GM12878 (cell line): ENCODE measurements at regions of chr2 and their contacts with region 1.

Region 1: DNA sequence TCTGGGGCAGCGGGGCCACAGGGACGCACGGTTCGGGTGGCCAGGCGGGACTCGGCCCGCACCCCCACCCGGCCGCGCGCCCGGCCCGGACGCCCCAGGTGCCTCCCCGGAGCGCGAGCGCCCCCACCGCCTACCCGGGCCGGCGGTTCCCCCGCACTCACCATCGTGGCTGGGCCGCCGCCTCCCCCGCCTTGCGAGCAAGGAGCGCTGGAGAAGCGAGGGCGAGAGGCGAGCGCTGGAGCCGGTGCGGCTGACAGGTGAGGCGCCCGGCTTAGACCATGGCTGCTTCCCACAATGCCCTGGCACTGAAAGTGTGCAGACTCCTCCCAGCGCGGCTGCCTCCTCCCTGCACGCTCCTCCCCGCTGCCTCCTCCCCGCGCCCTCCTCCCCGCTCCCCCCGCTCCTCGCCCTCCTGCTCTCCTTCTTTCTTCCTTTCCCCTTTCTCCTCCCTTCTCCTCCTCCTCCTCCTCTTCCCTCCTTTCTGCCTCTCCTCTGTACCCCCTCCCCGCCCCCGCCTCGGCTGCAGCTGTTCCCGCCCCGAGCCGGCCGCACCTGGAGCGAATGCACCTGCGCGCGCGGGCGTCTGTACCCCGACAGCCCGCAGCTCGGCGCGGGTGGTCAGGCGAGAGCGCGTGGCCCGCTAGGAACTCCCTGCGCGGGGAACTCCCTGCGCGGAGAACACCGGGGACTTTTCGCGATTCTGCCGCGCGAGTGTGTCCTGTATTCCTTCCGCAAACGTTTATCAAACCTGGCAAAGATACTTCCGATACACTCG is at the start of gene AP1S3:
- DNase-seq: no peak
- ATAC-seq: peak; percentile 84
- H3K4me3 ChIP-seq: peak within 1 kb of the TSS; percentile 82
- H3K27ac ChIP-seq: peak within 1 kb of the TSS; percentile 58
- H3K4me1 ChIP-seq: peaks cover 8% of the 10 kb centered on the region; the same call in 1 of the 2 replicates
- H3K27me3 ChIP-seq: no peaks in the 10 kb centered on the region
- CTCF ChIP-seq: peak in 2 of 3 experiments; percentile 11 to 24; a peak in 2 of 6 replicates
- EP300 ChIP-seq: 0 out of 4 replicates have a peak, but pooled peaks of 1 of the 2 experiments have one; percentile 3
- POLR2A ChIP-seq: peak; percentile 82
- RAD21 ChIP-seq: no peak
- polyA plus RNA-seq, gene AP1S3: 2.6 to 3.3 TPM

Region 2: DNA sequence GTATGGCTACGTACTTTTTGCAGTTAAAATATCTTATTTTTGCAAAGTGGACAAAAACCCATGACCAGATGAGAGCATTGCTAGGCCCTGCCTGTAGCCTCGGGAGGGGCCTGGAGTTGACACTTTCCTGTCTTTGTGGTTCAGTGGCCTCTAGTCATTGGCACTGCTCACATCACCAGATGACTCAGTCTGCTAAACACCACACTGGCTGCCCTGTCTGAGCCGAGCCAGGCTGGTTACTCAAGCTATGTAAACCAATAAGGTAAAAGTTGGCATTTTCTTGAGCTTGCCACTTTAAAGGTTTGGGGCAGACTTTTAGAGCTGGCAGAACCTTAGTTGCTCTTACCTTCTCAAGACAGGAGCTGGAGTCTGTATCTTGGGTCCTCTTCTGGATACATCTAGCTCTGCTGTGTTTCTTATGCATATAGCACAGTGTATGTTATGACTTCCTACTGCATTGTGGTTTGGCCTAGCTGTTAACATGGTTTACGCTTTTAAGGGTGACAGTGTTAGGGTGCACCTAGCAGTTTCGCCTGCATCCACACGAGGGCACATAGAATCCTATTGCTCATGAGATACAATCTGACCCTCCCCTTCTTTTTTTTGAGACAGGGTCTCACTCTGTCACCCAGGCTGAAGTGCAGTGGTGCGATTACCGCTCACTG is 76.5 kb before region 1 on chr2:
- CTCF ChIA-PET with region 1: interaction called, 3 read pairs
- POLR2A ChIA-PET with region 1: no interaction called
- RAD21 ChIA-PET with region 1: interaction called, 3 read pairs
- SMC1A ChIA-PET with region 1: interaction called, 3 read pairs
- in situ Hi-C with region 1: no loop called
- intact Hi-C with region 1: loop called (anchors 1 kb)
- DNase-seq: peak; percentile 53
- ATAC-seq: peak; percentile 91
- H3K4me3 ChIP-seq: no peak overlapping the region
- H3K27ac ChIP-seq: peak overlapping the region; percentile 58
- H3K4me1 ChIP-seq: peaks cover 27% of the 10 kb centered on the region
- H3K27me3 ChIP-seq: no peaks in the 10 kb centered on the region
- CTCF ChIP-seq: peak; percentile 30 to 51 (median 46)
- EP300 ChIP-seq: no peak
- POLR2A ChIP-seq: no peak
- RAD21 ChIP-seq: peak; percentile 35; the same call in 1 of the 2 replicates

Region 3: GRCh38 chr2:223811757-223812156 is 25.7 kb before region 1 on chr2:
- CTCF ChIA-PET with region 1: interaction called, 3 read pairs
- POLR2A ChIA-PET with region 1: no interaction called
- RAD21 ChIA-PET with region 1: no interaction called
- SMC1A ChIA-PET with region 1: no interaction called
- in situ Hi-C with region 1: no loop called
- intact Hi-C with region 1: loop called (anchors 2 kb)
- DNase-seq: no peak
- ATAC-seq: no peak
- H3K4me3 ChIP-seq: no peak overlapping the region
- H3K27ac ChIP-seq: no peak overlapping the region
- H3K4me1 ChIP-seq: no peaks in the 10 kb centered on the region
- H3K27me3 ChIP-seq: no peaks in the 10 kb centered on the region
- CTCF ChIP-seq: no peak
- EP300 ChIP-seq: no peak
- POLR2A ChIP-seq: no peak
- RAD21 ChIP-seq: no peak

Region 4: DNA sequence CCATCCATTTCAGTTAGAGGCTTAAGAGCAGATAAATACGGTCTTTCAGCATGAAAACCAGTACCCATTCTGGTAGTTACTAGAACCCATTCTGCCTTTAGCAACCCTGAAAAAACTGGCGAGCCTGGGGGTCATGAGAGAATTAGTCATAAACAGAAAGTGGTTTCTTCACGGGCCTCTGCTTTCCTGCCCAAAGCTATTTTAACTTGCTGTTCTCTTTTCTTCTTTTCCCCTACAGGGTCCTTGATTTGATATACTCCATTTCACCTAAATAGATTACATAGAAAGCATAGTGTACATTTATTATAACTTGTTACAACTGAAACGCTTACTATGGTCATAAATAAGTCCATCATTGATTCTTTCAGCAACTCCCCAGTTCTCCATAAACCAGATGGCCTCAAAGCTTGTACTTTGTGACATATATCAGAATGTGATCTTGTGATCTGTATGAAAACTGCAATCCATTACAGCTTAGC is 59.4 kb after region 1 on chr2:
- CTCF ChIA-PET with region 1: no interaction called
- POLR2A ChIA-PET with region 1: interaction called, 3 read pairs
- RAD21 ChIA-PET with region 1: no interaction called
- SMC1A ChIA-PET with region 1: interaction called, 7 read pairs
- in situ Hi-C with region 1: no loop called
- intact Hi-C with region 1: loop called (anchors 2 kb)
- DNase-seq: peak; percentile 89
- ATAC-seq: peak; percentile 83
- H3K4me3 ChIP-seq: no peak overlapping the region
- H3K27ac ChIP-seq: peak overlapping the region; percentile 82
- H3K4me1 ChIP-seq: peaks cover 45% of the 10 kb centered on the region
- H3K27me3 ChIP-seq: no peaks in the 10 kb centered on the region
- CTCF ChIP-seq: no peak
- EP300 ChIP-seq: peak; percentile 79 to 87
- POLR2A ChIP-seq: no peak
- RAD21 ChIP-seq: no peak

Region 5: GRCh38 chr2:223944703-223945531 is 107.4 kb after region 1 on chr2 and contains the start of gene WDFY1:
- CTCF ChIA-PET with region 1: no interaction called
- POLR2A ChIA-PET with region 1: no interaction called
- RAD21 ChIA-PET with region 1: no interaction called
- SMC1A ChIA-PET with region 1: interaction called, 3 read pairs
- in situ Hi-C with region 1: no loop called
- intact Hi-C with region 1: loop called (anchors 5 kb)
- DNase-seq: no peak
- ATAC-seq: peak; percentile 94
- H3K4me3 ChIP-seq: peak within 1 kb of the TSS; percentile 75
- H3K27ac ChIP-seq: peak within 1 kb of the TSS; percentile 76
- H3K4me1 ChIP-seq: peaks cover 19% of the 10 kb centered on the region
- H3K27me3 ChIP-seq: no peaks in the 10 kb centered on the region
- CTCF ChIP-seq: no peak
- EP300 ChIP-seq: no peak
- POLR2A ChIP-seq: peak; percentile 98
- RAD21 ChIP-seq: no peak
- polyA plus RNA-seq, gene WDFY1: 2.9 to 4.6 TPM